ENCODE measurements at regions of chr17 and their contacts with region 1.

Region 1: GRCh38 chr17:27609611-27610303 is 21.2 kb upstream of the LGALS9 start:
- DNase-seq: peak; percentile 25
- H3K4me3 ChIP-seq: no peak overlapping the region
- H3K27ac ChIP-seq: no peak overlapping the region
- H3K4me1 ChIP-seq: no peaks in the 10 kb centered on the region
- H3K27me3 ChIP-seq: no peaks in the 10 kb centered on the region
- CTCF ChIP-seq: peak; percentile 58

Region 2: GRCh38 chr17:27339836-27340550 is 269.8 kb before region 1 on chr17:
- CTCF ChIA-PET with region 1: no interaction called
- POLR2A ChIA-PET with region 1: no interaction called
- intact Hi-C with region 1: loop called (anchors 5 kb)
- DNase-seq: no peak
- H3K4me3 ChIP-seq: no peak overlapping the region
- H3K27ac ChIP-seq: no peak overlapping the region
- H3K4me1 ChIP-seq: peaks cover 30% of the 10 kb centered on the region
- H3K27me3 ChIP-seq: no peaks in the 10 kb centered on the region
- CTCF ChIP-seq: no peak

Region 3: DNA sequence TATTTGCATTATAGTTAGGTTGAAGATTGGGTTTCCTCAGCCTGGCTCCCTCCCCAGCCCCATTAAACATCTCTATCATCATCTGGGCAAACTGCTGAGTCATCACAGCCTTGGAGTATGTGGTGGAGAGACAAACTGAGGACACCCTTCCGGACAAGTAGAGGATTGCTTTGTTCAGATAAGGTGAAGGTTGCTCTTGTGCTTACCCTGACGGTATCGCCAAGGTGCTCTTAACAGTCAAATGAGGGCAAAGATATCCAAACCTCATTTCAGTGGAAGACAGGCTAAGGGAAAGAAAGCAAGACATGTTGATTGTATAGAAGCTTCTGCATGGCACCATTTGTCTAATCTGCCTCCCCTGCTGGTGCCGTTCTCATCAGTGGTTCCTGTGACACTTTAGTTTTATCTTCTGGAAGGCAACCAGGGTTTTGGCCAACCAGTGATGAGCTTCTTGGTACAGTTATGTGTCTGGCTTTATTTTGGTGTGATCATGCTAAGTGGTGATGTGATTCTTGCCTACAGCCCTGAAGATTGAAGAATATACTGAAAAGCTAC is 35.7 kb before region 1 on chr17:
- CTCF ChIA-PET with region 1: no interaction called
- POLR2A ChIA-PET with region 1: no interaction called
- intact Hi-C with region 1: loop called (anchors 5 kb)
- DNase-seq: no peak
- H3K4me3 ChIP-seq: no peak overlapping the region
- H3K27ac ChIP-seq: peak overlapping the region; percentile 38
- H3K4me1 ChIP-seq: peaks cover 45% of the 10 kb centered on the region
- H3K27me3 ChIP-seq: no peaks in the 10 kb centered on the region
- CTCF ChIP-seq: no peak

Region 4: DNA sequence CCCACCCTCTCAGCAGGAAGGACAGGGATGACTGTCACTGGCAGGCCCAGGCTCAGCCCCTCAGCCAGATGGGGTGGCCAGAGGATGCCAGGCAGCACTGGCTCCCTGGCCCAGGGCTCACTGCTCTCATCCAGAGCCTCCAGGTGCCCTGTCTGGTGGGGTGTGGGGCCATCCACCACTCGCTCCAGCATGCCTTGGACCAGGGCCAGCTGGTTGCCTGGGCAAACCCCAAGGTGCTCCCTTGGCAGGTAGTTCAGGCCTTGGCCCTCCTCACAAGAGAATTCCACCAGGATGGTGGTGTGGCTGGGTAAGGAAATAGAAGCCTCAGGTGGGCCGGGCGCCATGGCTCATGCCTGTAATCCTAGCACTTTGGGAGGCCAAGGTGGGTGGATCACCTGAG is 50.7 kb after region 1 on chr17:
- CTCF ChIA-PET with region 1: no interaction called
- POLR2A ChIA-PET with region 1: no interaction called
- intact Hi-C with region 1: no loop called
- DNase-seq: no peak
- H3K4me3 ChIP-seq: no peak overlapping the region
- H3K27ac ChIP-seq: no peak overlapping the region
- H3K4me1 ChIP-seq: no peaks in the 10 kb centered on the region
- H3K27me3 ChIP-seq: no peaks in the 10 kb centered on the region
- CTCF ChIP-seq: no peak

Measured in A673 (cell line).